WTC11 (cell line): ENCODE measurements at regions of chr4 and their contacts with region 1.

Region 1: DNA sequence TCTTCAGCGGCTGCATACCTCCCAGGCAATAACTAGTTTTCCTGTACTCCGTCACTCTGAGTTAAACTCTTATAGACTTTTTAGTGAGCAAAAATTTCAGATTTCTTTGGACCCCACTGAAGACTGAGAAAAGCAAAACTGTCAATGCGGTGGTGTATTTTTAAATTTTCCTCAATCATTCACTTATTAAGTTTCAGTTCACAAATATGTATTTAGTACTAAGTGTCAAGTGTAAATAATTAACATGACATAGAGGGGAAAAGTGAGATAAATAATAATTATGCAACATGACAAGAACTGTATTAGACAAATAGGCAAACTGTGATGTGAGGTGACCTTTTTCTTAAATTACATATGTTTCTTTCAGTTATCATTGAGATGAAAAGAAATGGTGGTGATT is 124.4 kb downstream of the NAF1 start:
- DNase-seq: no peak
- ATAC-seq: no peak
- H3K4me3 Mint-ChIP-seq: no peak overlapping the region
- H3K27ac Mint-ChIP-seq: no peak overlapping the region
- H3K4me1 Mint-ChIP-seq: peaks cover 7% of the 10 kb centered on the region; the same call in 1 of the 2 replicates
- H3K27me3 Mint-ChIP-seq: no peaks in the 10 kb centered on the region
- CTCF ChIP-seq: no peak

Region 2: GRCh38 chr4:162497564-162498167 is 544.6 kb before region 1 on chr4:
- CTCF ChIA-PET with region 1: interaction called, 10 read pairs
- POLR2A ChIA-PET with region 1: no interaction called
- DNase-seq: no peak
- ATAC-seq: 0 out of 2 replicates have a peak, but pooled peaks have one; percentile 36
- H3K4me3 Mint-ChIP-seq: no peak overlapping the region
- H3K27ac Mint-ChIP-seq: no peak overlapping the region
- H3K4me1 Mint-ChIP-seq: no peaks in the 10 kb centered on the region
- H3K27me3 Mint-ChIP-seq: no peaks in the 10 kb centered on the region
- CTCF ChIP-seq: peak; percentile 75

Region 3: GRCh38 chr4:163148466-163149336 is 106.4 kb after region 1 on chr4:
- CTCF ChIA-PET with region 1: no interaction called
- POLR2A ChIA-PET with region 1: no interaction called
- DNase-seq: no peak
- ATAC-seq: no peak
- H3K4me3 Mint-ChIP-seq: no peak overlapping the region
- H3K27ac Mint-ChIP-seq: peak overlapping the region; percentile 55; the same call in 1 of the 2 replicates
- H3K4me1 Mint-ChIP-seq: peaks cover 11% of the 10 kb centered on the region
- H3K27me3 Mint-ChIP-seq: no peaks in the 10 kb centered on the region
- CTCF ChIP-seq: no peak